Heart left ventricle (tissue), 16 donors: ENCODE measurements at regions of chr6 and their contacts with region 1.

Region 1: GRCh38 chr6:102438171-102438570 is 1044.7 kb downstream of the GRIK2 start:
- DNase-seq: no peak
- ATAC-seq: no peak
- H3K4me3 ChIP-seq: no peak overlapping the region
- H3K27ac ChIP-seq: no peak overlapping the region
- H3K4me1 ChIP-seq: no peaks in the 10 kb centered on the region
- H3K27me3 ChIP-seq: no peaks in the 10 kb centered on the region
- CTCF ChIP-seq: no peak
- POLR2A ChIP-seq: no peak

Region 2: GRCh38 chr6:102520966-102521365 is 82.8 kb after region 1 on chr6:
- intact Hi-C with region 1: no loop called
- DNase-seq: no peak
- ATAC-seq: no peak
- H3K4me3 ChIP-seq: no peak overlapping the region
- H3K27ac ChIP-seq: no peak overlapping the region
- H3K4me1 ChIP-seq: no peaks in the 10 kb centered on the region
- H3K27me3 ChIP-seq: no peaks in the 10 kb centered on the region
- CTCF ChIP-seq: no peak
- POLR2A ChIP-seq: no peak

Region 3: DNA sequence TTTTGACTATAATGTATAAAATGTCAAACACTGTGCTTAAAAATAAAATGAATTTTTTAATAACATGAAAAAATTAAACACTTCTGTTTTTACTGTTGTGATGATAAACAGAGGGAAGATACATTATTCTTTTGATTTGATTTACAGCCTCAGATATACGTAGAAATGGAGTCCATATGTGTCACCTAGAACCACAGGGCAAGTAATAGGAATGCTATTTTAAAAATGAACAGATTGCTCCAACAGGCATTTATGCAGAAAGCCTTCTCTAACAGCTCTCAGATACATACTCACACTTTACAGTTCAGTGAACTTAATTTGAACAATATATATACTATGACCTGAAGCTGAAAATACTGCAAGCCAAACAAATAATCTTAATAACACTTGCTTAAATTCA is 506.3 kb after region 1 on chr6:
- intact Hi-C with region 1: no loop called
- DNase-seq: no peak
- ATAC-seq: no peak
- H3K4me3 ChIP-seq: no peak overlapping the region
- H3K27ac ChIP-seq: no peak overlapping the region
- H3K4me1 ChIP-seq: no peaks in the 10 kb centered on the region
- H3K27me3 ChIP-seq: no peaks in the 10 kb centered on the region
- CTCF ChIP-seq: no peak
- POLR2A ChIP-seq: no peak

Region 4: GRCh38 chr6:103284835-103285234 is 846.7 kb after region 1 on chr6:
- intact Hi-C with region 1: loop called in 1 of 10 experiments (anchors 10 kb)
- DNase-seq: no peak
- ATAC-seq: no peak
- H3K4me3 ChIP-seq: no peak overlapping the region
- H3K27ac ChIP-seq: no peak overlapping the region
- H3K4me1 ChIP-seq: no peaks in the 10 kb centered on the region
- H3K27me3 ChIP-seq: no peaks in the 10 kb centered on the region
- CTCF ChIP-seq: no peak
- POLR2A ChIP-seq: no peak